ENCODE measurements at regions of chr10 and their contacts with region 1.

Region 1: DNA sequence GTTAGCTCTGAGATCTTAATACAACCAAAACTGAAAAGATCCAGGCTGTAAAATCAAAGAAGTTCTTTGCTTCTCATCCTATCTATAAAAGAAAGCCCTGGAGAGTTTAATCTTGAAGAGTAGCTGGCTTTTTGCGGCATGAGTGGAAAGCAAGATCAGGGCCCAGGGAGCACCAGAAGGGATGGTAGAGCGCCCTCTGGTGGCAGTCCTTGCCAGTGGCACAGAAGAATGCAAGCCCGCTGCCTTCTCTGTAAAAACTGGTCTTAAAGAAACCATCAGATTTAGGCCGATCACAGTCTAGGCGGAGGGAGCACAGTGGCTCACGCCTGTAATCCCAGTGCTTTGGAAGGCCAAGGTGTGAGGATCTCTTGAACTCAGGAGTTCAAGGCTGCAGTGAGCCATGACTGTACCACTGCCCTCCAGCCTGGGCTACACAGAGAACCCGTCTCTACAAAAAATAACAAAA is 35.6 kb downstream of the CPN1 start:
- DNase-seq: peak; percentile 85
- H3K4me3 ChIP-seq: no peak overlapping the region
- H3K27ac ChIP-seq: no peak overlapping the region
- H3K4me1 ChIP-seq: peaks cover 19% of the 10 kb centered on the region
- H3K27me3 ChIP-seq: no peaks in the 10 kb centered on the region
- CTCF ChIP-seq: peak; percentile 88 to 94
- POLR2A ChIP-seq: no peak

Region 2: DNA sequence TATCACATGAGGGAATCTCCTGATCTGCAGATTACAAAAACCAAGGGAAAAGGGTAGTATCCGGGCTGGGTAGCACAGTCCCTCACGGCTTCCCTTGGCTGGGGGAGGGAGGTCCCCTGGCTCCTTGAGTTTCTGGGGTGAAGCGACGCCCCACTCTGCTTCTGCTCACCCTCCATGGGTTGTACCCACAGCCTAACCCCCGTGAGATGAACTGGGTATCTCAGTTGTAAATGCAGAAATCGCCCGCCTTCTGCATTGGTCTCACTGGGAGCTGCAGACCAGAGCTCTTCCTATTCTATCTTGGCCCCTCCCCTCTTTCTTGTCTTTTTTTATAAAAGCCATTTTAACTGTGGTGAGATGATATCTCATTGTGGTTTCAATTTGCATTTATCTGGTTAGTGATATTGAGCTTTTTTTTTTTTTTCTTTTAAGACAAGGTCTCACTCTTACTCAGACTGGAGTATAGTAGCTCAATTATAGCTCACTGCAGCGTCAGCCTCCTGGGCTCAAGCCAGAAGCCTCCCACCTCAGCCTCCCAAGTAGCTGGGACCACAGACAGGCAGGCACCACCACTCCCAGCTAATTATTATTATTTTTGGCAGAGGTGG is 175.8 kb before region 1 on chr10:
- CTCF ChIA-PET with region 1: interaction called, 13 read pairs
- POLR2A ChIA-PET with region 1: no interaction called
- dilution Hi-C with region 1: no loop called
- intact Hi-C with region 1: no loop called
- DNase-seq: no peak
- H3K4me3 ChIP-seq: no peak overlapping the region
- H3K27ac ChIP-seq: no peak overlapping the region
- H3K4me1 ChIP-seq: peaks cover 4% of the 10 kb centered on the region
- H3K27me3 ChIP-seq: no peaks in the 10 kb centered on the region
- CTCF ChIP-seq: no peak
- POLR2A ChIP-seq: peak; percentile 25

Region 3: GRCh38 chr10:99906470-99906869 is 139.6 kb before region 1 on chr10:
- CTCF ChIA-PET with region 1: interaction called, 113 read pairs
- POLR2A ChIA-PET with region 1: no interaction called
- dilution Hi-C with region 1: no loop called
- intact Hi-C with region 1: loop called (anchors 1 kb)
- DNase-seq: peak; percentile 67
- H3K4me3 ChIP-seq: no peak overlapping the region
- H3K27ac ChIP-seq: peak overlapping the region; percentile 66
- H3K4me1 ChIP-seq: peaks cover 21% of the 10 kb centered on the region
- H3K27me3 ChIP-seq: no peaks in the 10 kb centered on the region
- CTCF ChIP-seq: peak; percentile 8 to 36
- POLR2A ChIP-seq: no peak

Region 4: DNA sequence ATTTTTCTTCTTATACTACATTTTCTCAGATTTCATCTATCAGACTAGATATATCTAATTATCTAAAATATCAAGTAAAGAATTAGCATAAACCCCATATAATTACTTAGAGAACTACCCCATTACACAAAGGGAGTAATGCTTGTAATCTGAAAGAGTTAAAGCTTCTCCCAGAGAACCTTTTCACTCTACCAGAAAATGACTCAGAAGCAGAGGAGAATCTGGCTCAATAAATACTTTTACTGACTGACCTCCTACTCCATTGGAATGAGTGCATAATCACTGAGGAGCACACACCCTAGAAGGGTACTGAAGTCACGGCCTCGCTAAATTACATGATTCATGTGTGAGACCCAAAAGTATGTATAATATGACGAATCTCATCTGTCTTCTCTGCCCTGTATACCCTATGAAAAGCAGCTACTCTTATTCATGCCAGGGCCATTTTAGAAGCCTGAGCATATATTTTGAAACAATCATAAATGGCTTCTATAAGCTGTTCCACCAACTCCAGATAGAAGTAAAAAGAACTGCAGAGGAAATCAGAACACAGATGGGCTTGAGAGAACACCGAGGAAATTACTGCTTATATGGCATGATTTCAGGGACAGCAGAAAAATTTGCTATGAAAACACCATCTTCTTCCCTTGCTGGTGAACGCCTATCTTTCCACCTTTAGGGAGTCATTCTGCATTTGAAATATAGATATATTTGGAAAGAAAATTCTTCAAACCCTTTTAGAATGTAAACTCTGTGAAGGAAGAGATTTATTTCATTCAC is 69.0 kb before region 1 on chr10:
- CTCF ChIA-PET with region 1: interaction called, 16 read pairs
- POLR2A ChIA-PET with region 1: no interaction called
- dilution Hi-C with region 1: no loop called
- intact Hi-C with region 1: no loop called
- DNase-seq: peak; percentile 87
- H3K4me3 ChIP-seq: peak overlapping the region in 1 of 3 experiments; percentile 12
- H3K27ac ChIP-seq: peak overlapping the region; percentile 69
- H3K4me1 ChIP-seq: peaks cover 57% of the 10 kb centered on the region
- H3K27me3 ChIP-seq: no peaks in the 10 kb centered on the region
- CTCF ChIP-seq: no peak
- POLR2A ChIP-seq: no peak

Region 5: GRCh38 chr10:100025576-100025975 is 20.5 kb before region 1 on chr10:
- CTCF ChIA-PET with region 1: interaction called, 21 read pairs
- POLR2A ChIA-PET with region 1: no interaction called
- dilution Hi-C with region 1: no loop called
- intact Hi-C with region 1: no loop called
- DNase-seq: no peak
- H3K4me3 ChIP-seq: no peak overlapping the region
- H3K27ac ChIP-seq: no peak overlapping the region
- H3K4me1 ChIP-seq: no peaks in the 10 kb centered on the region
- H3K27me3 ChIP-seq: no peaks in the 10 kb centered on the region
- CTCF ChIP-seq: no peak
- POLR2A ChIP-seq: no peak

Region 6: GRCh38 chr10:100158044-100158808 is 112.2 kb after region 1 on chr10:
- CTCF ChIA-PET with region 1: no interaction called
- POLR2A ChIA-PET with region 1: no interaction called
- dilution Hi-C with region 1: no loop called
- intact Hi-C with region 1: no loop called
- DNase-seq: no peak
- H3K4me3 ChIP-seq: no peak overlapping the region
- H3K27ac ChIP-seq: no peak overlapping the region
- H3K4me1 ChIP-seq: no peaks in the 10 kb centered on the region
- H3K27me3 ChIP-seq: no peaks in the 10 kb centered on the region
- CTCF ChIP-seq: no peak
- POLR2A ChIP-seq: no peak